GM10248 (cell line): ENCODE measurements at regions of chr2 and their contacts with region 1.

Region 1: GRCh38 chr2:189751080-189751658 is 11.4 kb downstream of the OSGEPL1 start:
- DNase-seq: peak; percentile 35
- CTCF ChIP-seq: peak; percentile 65

Region 2: GRCh38 chr2:189762551-189763298 is 11.6 kb after region 1 on chr2 and contains the start of gene OSGEPL1:
- CTCF ChIA-PET with region 1: interaction called, 79 read pairs
- POLR2A ChIA-PET with region 1: no interaction called
- DNase-seq: peak; percentile 82
- CTCF ChIP-seq: peak; percentile 68